ENCODE measurements at regions of chrX and their contacts with region 1.

Region 1: DNA sequence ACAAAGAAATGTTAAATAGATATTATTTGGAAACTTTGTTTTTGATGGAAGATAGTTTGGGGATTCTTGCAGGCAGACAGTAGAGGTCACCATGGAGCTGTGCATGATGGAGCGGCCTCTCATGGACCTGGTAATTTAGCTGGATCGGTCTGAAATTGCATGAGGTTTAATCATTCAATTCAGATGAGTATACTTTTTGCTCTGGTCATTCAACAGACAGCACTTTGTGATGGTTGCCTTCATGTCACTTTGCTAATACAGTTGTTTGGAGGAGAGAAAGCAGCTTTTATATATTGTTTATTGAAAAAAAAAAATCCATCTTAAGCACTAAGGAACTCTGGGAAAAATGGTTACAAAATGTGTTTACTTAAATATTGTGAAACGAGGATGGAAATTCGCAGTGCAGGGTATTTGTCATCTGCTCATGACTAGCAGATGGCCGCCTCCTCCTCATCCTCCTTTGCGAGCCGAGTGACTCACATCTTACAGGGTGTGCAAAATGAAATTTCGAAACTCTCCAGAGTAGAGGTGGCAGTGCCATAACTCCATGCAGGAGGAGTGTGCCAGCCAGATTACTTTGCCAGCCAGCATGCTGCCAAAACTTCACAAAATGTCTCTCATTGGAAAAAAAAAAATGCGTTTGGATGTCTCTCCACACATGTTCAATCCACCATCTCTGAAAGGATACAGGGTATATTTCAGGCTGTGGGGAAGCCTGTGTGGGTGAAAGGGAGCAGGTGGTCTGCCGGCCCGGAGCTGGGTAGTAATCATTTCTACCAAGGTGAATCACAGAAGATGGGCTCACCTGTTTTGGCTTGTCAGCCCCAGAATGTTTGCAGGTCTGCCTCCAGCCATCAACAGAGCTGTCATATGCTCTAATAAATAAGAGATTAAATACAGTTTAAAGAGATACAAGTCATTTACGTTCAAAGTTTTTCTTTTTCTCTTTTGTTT is 314.9 kb upstream of the DIPK2B start:
- DNase-seq: peak; percentile 82

Region 2: DNA sequence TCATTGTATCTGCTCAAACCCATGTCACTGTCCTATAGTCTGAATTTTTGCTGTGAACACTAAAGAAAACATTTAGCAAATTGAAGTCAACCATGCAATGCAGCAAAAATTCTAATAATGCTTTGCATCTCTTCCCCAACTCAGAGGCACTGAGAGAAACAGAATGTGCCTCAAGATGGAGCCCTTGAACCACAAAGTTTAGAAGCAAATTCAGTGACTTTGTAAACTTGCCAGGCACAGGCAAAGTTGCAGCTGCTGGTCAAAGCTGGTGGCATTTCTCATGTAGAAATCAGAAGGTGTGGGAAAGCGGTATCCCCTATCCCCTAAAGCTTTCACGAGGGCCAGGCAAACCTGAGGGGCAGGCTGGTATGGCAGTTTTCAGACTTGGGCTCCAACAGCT is 193.2 kb before region 1 on chrX:
- intact Hi-C with region 1: loop called in 1 of 2 experiments (anchors 10 kb)
- DNase-seq: no peak

Region 3: GRCh38 chrX:45497290-45497689 is 18.2 kb before region 1 on chrX:
- intact Hi-C with region 1: loop called in 1 of 2 experiments (anchors 1 kb)
- DNase-seq: no peak

Region 4: GRCh38 chrX:45781901-45782553 is 266.5 kb after region 1 on chrX:
- intact Hi-C with region 1: loop called in 1 of 2 experiments (anchors 10 kb)
- DNase-seq: no peak

Region 5: DNA sequence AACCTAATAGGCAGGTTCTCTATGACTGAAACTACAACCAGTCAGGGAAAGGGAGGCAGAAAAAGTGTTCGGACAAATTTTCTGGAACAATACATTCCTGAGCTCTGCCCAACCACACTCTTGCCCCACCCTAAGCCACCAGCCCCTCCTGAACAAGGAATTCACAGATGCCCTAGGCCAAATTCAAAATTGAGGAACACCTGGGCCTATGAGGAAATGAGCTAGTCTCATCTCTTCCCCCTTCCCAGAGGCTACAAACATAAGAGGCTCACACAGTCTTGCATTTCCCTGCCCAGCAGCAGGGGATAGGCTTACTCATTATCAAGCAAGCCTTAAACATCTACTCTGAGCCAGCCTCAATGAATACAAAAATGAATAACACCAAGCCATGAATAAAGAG is 745.0 kb after region 1 on chrX:
- intact Hi-C with region 1: no loop called
- DNase-seq: no peak